ENCODE measurements at regions of chr18 and their contacts with region 1.

Region 1: GRCh38 chr18:35603528-35603927 is 22.0 kb downstream of the GALNT1 start:
- DNase-seq: no peak
- H3K4me3 Mint-ChIP-seq: no peak overlapping the region
- H3K27ac Mint-ChIP-seq: no peak overlapping the region
- H3K4me1 Mint-ChIP-seq: peaks cover 54% of the 10 kb centered on the region
- H3K27me3 Mint-ChIP-seq: no peaks in the 10 kb centered on the region
- CTCF ChIP-seq: no peak

Region 2: GRCh38 chr18:35432565-35433001 is 170.9 kb before region 1 on chr18:
- CTCF ChIA-PET with region 1: no interaction called
- intact Hi-C with region 1: no loop called
- DNase-seq: no peak
- H3K4me3 Mint-ChIP-seq: no peak overlapping the region
- H3K27ac Mint-ChIP-seq: no peak overlapping the region
- H3K4me1 Mint-ChIP-seq: peaks cover 9% of the 10 kb centered on the region
- H3K27me3 Mint-ChIP-seq: no peaks in the 10 kb centered on the region
- CTCF ChIP-seq: no peak

Region 3: GRCh38 chr18:36212301-36213171 is 609.0 kb after region 1 on chr18:
- CTCF ChIA-PET with region 1: interaction called, 10 read pairs
- intact Hi-C with region 1: no loop called
- DNase-seq: no peak
- H3K4me3 Mint-ChIP-seq: no peak overlapping the region
- H3K27ac Mint-ChIP-seq: no peak overlapping the region
- H3K4me1 Mint-ChIP-seq: no peaks in the 10 kb centered on the region
- H3K27me3 Mint-ChIP-seq: no peaks in the 10 kb centered on the region
- CTCF ChIP-seq: no peak

Region 4: GRCh38 chr18:36372903-36373311 is 769.4 kb after region 1 on chr18:
- CTCF ChIA-PET with region 1: no interaction called
- intact Hi-C with region 1: no loop called
- DNase-seq: peak; percentile 67
- H3K4me3 Mint-ChIP-seq: no peak overlapping the region
- H3K27ac Mint-ChIP-seq: no peak overlapping the region
- H3K4me1 Mint-ChIP-seq: peaks cover 19% of the 10 kb centered on the region
- H3K27me3 Mint-ChIP-seq: peaks cover 32% of the 10 kb centered on the region
- CTCF ChIP-seq: peak; percentile 38

Measured in Calu3 (cell line).